ENCODE measurements at regions of chr5 and their contacts with region 1.

Region 1: GRCh38 chr5:79133657-79134451 is 22.2 kb downstream of the BHMT start:
- DNase-seq: peak; percentile 71
- H3K4me3 ChIP-seq: peak overlapping the region; percentile 48
- H3K27ac ChIP-seq: peak overlapping the region; percentile 80
- H3K27me3 ChIP-seq: peaks cover 5% of the 10 kb centered on the region
- CTCF ChIP-seq: peak; percentile 89

Region 2: GRCh38 chr5:79048437-79048836 is 85.4 kb before region 1 on chr5:
- CTCF ChIA-PET with region 1: interaction called, 10 read pairs
- POLR2A ChIA-PET with region 1: no interaction called
- DNase-seq: no peak
- H3K4me3 ChIP-seq: no peak overlapping the region
- H3K27ac ChIP-seq: no peak overlapping the region
- H3K27me3 ChIP-seq: peaks cover 12% of the 10 kb centered on the region
- CTCF ChIP-seq: no peak

Region 3: GRCh38 chr5:79120216-79120615 is 13.6 kb before region 1 on chr5:
- CTCF ChIA-PET with region 1: interaction called, 25 read pairs
- POLR2A ChIA-PET with region 1: no interaction called
- DNase-seq: no peak
- H3K4me3 ChIP-seq: no peak overlapping the region
- H3K27ac ChIP-seq: no peak overlapping the region
- H3K27me3 ChIP-seq: peaks cover 7% of the 10 kb centered on the region
- CTCF ChIP-seq: no peak

Region 4: DNA sequence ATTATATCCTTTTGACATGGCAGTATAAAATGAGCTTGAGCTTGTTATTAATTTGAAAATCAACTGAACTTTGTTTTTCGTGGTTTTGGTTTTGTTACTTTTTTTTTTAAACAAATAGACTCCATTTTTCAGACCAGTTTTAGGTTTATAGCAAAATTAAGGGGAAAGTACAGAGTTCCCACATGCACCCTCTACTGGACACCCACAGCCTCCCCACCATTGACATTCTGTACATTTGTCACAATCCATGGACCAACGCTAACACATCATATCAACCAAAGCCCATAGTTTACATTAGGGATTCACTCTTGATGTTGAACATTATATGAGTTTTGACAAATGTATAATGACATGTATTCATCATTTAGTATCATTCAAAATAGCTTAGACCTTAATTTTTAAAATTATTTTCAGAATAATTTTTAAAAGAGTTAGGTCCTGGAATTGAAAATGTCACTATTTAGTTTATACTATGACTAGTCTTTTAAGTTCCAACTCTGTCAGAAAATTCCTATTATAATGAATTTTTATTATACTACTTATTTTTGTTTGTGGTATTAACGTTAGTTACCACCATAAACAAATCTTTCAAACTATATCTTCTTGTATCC is 66.8 kb after region 1 on chr5:
- CTCF ChIA-PET with region 1: interaction called, 17 read pairs
- POLR2A ChIA-PET with region 1: no interaction called
- DNase-seq: no peak
- H3K4me3 ChIP-seq: no peak overlapping the region
- H3K27ac ChIP-seq: no peak overlapping the region
- H3K27me3 ChIP-seq: no peaks in the 10 kb centered on the region
- CTCF ChIP-seq: peak; percentile 64

Region 5: DNA sequence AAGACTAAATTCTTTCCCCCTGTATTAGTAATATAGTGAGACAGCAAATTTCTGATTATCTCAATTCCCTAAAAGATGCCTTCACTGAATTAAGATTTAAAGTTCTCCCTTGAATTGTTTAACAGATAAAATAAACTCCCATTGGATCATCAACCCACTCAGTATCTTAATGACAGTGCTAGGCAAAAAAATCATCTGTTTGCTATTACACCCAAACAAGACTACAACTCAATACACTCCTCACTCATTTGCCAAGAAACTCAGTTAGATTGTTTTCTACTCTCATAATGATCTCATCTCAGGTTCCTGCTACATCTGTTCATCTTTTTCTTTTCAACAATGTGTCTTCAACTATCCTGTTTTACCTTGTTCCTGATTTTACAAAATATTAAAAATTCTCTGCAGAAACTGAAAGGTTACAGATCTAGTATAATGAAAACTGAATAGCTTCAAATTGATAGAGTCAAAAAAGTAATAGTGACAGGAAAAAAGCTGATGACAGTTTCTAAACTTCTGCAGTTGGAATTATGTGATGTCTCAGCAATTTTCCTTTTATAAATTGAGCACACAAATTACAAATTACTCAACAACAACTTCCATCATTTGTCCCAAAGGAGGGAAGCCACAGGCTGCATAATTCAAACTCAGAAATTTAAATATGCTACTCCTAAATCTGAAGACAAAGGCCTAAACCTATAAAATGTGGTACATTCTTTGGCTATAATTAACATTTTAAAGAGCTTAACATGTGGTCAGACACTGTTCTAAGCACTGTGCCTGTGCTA is 340.7 kb after region 1 on chr5:
- CTCF ChIA-PET with region 1: interaction called, 39 read pairs
- POLR2A ChIA-PET with region 1: no interaction called
- DNase-seq: no peak
- H3K4me3 ChIP-seq: no peak overlapping the region
- H3K27ac ChIP-seq: no peak overlapping the region
- H3K27me3 ChIP-seq: no peaks in the 10 kb centered on the region
- CTCF ChIP-seq: no peak

Region 6: DNA sequence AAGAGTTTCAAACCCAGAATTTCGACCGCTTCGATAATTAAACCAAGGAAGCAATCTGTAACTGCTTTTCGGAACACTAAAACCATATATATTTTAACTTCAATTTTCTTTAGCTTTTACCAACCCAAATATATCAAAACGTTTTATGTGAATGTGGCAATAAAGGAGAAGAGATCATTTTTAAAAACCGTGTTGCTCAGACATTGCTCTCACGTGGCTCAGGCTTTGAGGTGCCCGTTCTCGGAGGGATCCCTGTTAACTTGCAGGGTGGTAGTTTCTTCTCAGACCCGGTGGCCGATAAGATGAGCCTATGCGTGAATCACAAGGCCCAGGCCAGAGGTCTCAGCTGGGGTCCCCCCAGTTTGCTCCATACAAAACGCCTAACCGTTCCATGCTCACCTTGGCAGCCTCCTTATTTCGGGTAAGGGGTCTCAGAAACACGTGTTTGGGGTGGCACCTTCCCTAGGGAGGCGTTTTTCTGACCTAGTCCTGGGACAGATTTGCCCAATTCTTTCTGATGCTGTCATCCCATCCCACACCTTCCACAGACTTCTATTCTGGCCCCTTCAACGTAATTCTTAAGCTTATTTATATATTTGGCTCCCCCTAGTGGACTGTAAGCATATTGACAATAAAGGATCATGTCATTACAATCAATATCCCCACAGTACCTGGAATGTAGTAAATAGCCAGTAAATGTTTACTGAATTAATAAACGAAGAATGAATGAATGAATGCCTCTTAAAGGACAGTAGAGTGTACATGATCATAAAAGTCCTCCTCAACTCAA is 949.4 kb after region 1 on chr5:
- CTCF ChIA-PET with region 1: interaction called, 12 read pairs
- POLR2A ChIA-PET with region 1: no interaction called
- DNase-seq: peak; percentile 29
- H3K4me3 ChIP-seq: no peak overlapping the region
- H3K27ac ChIP-seq: no peak overlapping the region
- H3K27me3 ChIP-seq: peaks cover 4% of the 10 kb centered on the region
- CTCF ChIP-seq: peak; percentile 75

Measured in AG04450 (cell line).